ENCODE measurements at regions of chr7 and their contacts with region 1.

Region 1: DNA sequence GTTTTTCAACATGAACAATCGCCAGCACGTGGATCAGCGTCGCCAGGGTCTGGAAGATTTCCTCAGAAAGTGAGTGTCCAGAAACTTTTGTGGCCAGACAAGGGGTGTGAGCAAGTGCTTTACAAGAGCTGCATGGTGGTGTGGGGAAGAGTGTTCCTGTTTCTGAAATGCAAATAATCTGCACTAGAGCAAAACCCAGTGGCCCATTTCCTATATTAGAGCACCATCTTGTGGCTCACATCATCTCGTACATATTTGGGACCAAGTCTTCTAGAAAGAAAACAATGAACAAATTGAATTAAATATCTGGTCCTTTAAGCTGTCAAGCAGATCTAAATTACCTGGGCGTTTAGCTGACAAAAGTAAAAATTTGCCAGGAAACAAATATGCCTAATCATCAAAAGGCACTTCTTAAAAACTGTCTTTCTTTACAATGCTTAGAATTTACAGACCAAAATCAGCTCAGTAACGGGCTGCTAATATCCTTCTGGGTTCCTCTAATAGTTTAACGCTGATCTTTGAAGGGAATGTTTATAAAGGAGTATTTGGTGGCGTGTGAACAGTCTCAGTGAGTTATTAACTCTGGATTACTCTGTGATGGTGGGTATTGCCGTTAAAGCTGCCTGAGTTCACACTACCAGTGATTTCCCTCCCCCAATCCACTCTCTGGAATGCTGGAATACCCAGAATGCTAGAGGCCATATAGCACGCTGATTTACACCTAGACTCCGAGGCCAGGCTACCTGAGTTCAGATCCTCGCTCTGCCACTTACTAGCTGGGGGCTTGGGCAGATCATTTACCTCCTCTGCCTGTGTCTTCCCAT is 73.6 kb downstream of the SNX10 start:
- DNase-seq: peak; percentile 89
- ATAC-seq: peak; percentile 95
- H3K4me3 ChIP-seq: no peak overlapping the region
- H3K4me3 Mint-ChIP-seq: no peak overlapping the region
- H3K27ac ChIP-seq: no peak overlapping the region
- H3K27ac Mint-ChIP-seq: peak overlapping the region; percentile 84
- H3K4me1 ChIP-seq: peaks cover 32 to 33% of the 10 kb centered on the region in 2 donors
- H3K4me1 Mint-ChIP-seq: peaks cover 34% of the 10 kb centered on the region
- H3K27me3 ChIP-seq: no peaks in the 10 kb centered on the region
- H3K27me3 Mint-ChIP-seq: no peaks in the 10 kb centered on the region
- CTCF ChIP-seq: peak; percentile 85

Region 2: DNA sequence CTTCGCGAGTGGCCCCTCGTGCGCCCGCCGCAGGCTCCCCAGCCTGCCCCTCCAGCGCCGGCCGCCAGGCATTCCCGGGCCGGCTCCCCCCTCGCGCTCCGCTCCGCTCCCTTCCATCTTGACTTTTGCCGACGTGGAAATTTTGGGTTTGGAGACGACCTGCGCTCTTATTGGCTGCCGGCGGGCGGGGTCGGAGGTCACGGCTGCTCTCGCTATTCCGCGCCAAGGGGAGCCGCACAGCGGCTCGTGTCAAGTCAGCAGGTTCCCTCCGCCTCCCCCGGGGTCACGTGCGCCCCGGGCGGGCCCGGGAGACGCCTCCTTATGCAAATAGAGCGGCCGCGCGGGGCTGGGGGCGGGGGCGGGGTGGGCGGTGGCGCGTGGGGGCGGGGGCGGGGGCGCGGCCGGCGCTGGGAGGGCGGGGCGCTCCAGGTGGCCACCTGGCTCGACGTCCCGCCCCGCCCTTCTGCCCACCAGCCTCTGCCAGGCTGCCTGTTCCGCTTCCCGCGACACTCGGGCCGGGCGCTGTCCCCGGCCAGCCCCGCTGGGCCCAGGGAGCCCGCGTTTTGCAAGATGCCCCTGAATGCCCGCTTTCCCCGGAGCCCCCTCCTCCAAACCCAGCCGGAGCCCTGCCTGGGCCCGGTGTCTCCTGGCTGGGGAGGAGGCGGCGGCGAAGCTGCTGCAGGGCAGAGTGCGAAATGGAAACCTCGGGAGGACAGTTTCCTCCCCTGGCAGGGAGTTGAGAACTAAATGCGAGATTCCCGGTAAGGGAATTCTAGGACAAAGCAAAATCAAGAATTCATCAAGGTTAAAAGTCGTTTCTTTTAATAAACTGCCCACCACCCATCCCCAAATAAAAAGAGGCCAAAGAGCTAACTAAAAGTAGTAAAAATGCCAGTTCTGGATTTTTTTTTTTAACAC is 414.0 kb before region 1 on chr7:
- CTCF ChIA-PET with region 1: no interaction called
- POLR2A ChIA-PET with region 1: no interaction called
- intact Hi-C with region 1: no loop called
- DNase-seq: peak; percentile 90
- ATAC-seq: peak; percentile 90
- H3K4me3 ChIP-seq: peak overlapping the region; percentile 15 to 69 (median 51)
- H3K4me3 Mint-ChIP-seq: peak overlapping the region; percentile 89
- H3K27ac ChIP-seq: no peak overlapping the region
- H3K27ac Mint-ChIP-seq: peak overlapping the region; percentile 78
- H3K4me1 ChIP-seq: peaks cover 32 to 33% of the 10 kb centered on the region in 2 donors
- H3K4me1 Mint-ChIP-seq: peaks cover 35% of the 10 kb centered on the region
- H3K27me3 ChIP-seq: peaks cover 0 to 38% (median 33%) of the 10 kb centered on the region in 4 experiments
- H3K27me3 Mint-ChIP-seq: peaks cover 30% of the 10 kb centered on the region
- CTCF ChIP-seq: no peak

Region 3: GRCh38 chr7:26078437-26079336 is 286.6 kb before region 1 on chr7:
- CTCF ChIA-PET with region 1: interaction called, 77 read pairs
- POLR2A ChIA-PET with region 1: no interaction called
- intact Hi-C with region 1: loop called (anchors 1 kb)
- DNase-seq: peak; percentile 88
- ATAC-seq: peak; percentile 100
- H3K4me3 ChIP-seq: no peak overlapping the region
- H3K4me3 Mint-ChIP-seq: peak overlapping the region; percentile 35
- H3K27ac ChIP-seq: no peak overlapping the region
- H3K27ac Mint-ChIP-seq: no peak overlapping the region
- H3K4me1 ChIP-seq: peaks cover 6 to 9% of the 10 kb centered on the region in 2 donors
- H3K4me1 Mint-ChIP-seq: peaks cover 9% of the 10 kb centered on the region
- H3K27me3 ChIP-seq: peaks cover 0 to 31% (median 14%) of the 10 kb centered on the region in 4 experiments
- H3K27me3 Mint-ChIP-seq: peaks cover 53% of the 10 kb centered on the region
- CTCF ChIP-seq: peak; percentile 71

Region 4: GRCh38 chr7:26278770-26279169 is 86.5 kb before region 1 on chr7:
- CTCF ChIA-PET with region 1: interaction called, 133 read pairs
- POLR2A ChIA-PET with region 1: interaction called, 3 read pairs
- intact Hi-C with region 1: loop called (anchors 1 kb)
- DNase-seq: peak; percentile 66
- ATAC-seq: peak; percentile 64
- H3K4me3 ChIP-seq: no peak overlapping the region
- H3K4me3 Mint-ChIP-seq: no peak overlapping the region
- H3K27ac ChIP-seq: no peak overlapping the region
- H3K27ac Mint-ChIP-seq: no peak overlapping the region
- H3K4me1 ChIP-seq: peaks cover 0 to 3% of the 10 kb centered on the region in 2 donors
- H3K4me1 Mint-ChIP-seq: peaks cover 9% of the 10 kb centered on the region
- H3K27me3 ChIP-seq: no peaks in the 10 kb centered on the region
- H3K27me3 Mint-ChIP-seq: no peaks in the 10 kb centered on the region
- CTCF ChIP-seq: peak; percentile 64

Region 5: GRCh38 chr7:26337232-26337865 is 27.9 kb before region 1 on chr7:
- CTCF ChIA-PET with region 1: interaction called, 27 read pairs
- POLR2A ChIA-PET with region 1: interaction called, 3 read pairs
- intact Hi-C with region 1: loop called (anchors 2 kb)
- DNase-seq: peak; percentile 55
- ATAC-seq: peak; percentile 62
- H3K4me3 ChIP-seq: peak overlapping the region in 1 of 5 experiments; percentile 57
- H3K4me3 Mint-ChIP-seq: peak overlapping the region; percentile 78
- H3K27ac ChIP-seq: peak overlapping the region; percentile 36 to 68
- H3K27ac Mint-ChIP-seq: peak overlapping the region; percentile 91
- H3K4me1 ChIP-seq: peaks cover 70 to 80% of the 10 kb centered on the region in 2 donors
- H3K4me1 Mint-ChIP-seq: peaks cover 66% of the 10 kb centered on the region
- H3K27me3 ChIP-seq: no peaks in the 10 kb centered on the region
- H3K27me3 Mint-ChIP-seq: no peaks in the 10 kb centered on the region
- CTCF ChIP-seq: no peak

Region 6: GRCh38 chr7:26388256-26388655 is 23.0 kb after region 1 on chr7:
- CTCF ChIA-PET with region 1: interaction called, 16 read pairs
- POLR2A ChIA-PET with region 1: no interaction called
- intact Hi-C with region 1: no loop called
- DNase-seq: no peak
- ATAC-seq: no peak
- H3K4me3 ChIP-seq: no peak overlapping the region
- H3K4me3 Mint-ChIP-seq: no peak overlapping the region
- H3K27ac ChIP-seq: no peak overlapping the region
- H3K27ac Mint-ChIP-seq: no peak overlapping the region
- H3K4me1 ChIP-seq: peaks cover 0 to 4% of the 10 kb centered on the region in 2 donors
- H3K4me1 Mint-ChIP-seq: peaks cover 6% of the 10 kb centered on the region
- H3K27me3 ChIP-seq: peaks cover 0 to 9% (median 0%) of the 10 kb centered on the region in 4 experiments
- H3K27me3 Mint-ChIP-seq: peaks cover 17% of the 10 kb centered on the region
- CTCF ChIP-seq: no peak

Region 7: GRCh38 chr7:26667500-26668133 is 302.3 kb after region 1 on chr7:
- CTCF ChIA-PET with region 1: interaction called, 165 read pairs
- POLR2A ChIA-PET with region 1: no interaction called
- intact Hi-C with region 1: loop called (anchors 1 kb)
- DNase-seq: peak; percentile 75
- ATAC-seq: peak; percentile 66
- H3K4me3 ChIP-seq: no peak overlapping the region
- H3K4me3 Mint-ChIP-seq: no peak overlapping the region
- H3K27ac ChIP-seq: no peak overlapping the region
- H3K27ac Mint-ChIP-seq: no peak overlapping the region
- H3K4me1 ChIP-seq: peaks cover 0 to 6% of the 10 kb centered on the region in 2 donors
- H3K4me1 Mint-ChIP-seq: peaks cover 18% of the 10 kb centered on the region
- H3K27me3 ChIP-seq: no peaks in the 10 kb centered on the region
- H3K27me3 Mint-ChIP-seq: no peaks in the 10 kb centered on the region
- CTCF ChIP-seq: peak; percentile 77